ENCODE measurements at regions of chr9 and their contacts with region 1.

Region 1: DNA sequence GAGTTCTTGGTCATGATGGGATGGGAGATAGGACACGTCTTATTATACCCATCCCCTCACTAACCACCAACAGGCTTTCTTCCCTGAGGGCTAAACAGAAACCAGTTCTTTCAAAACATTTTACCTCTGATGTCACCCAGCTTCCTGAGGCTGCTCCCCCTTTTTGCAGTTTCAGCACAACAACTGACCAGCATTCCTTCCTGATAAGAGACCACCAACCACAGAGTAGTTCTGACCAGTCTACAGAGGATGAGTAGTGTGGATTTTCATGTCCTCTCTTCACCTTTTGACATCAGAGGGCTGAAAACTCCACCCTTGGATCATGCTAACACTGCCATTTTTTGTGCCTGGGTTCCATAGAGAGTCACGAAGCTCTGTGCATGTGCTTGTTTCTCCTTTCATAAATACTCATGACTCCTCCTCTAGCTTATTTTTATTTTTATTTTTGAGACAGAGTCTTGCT is 82.6 kb downstream of the OSTF1 start:
- DNase-seq: no peak
- H3K4me3 ChIP-seq: no peak overlapping the region
- H3K27ac ChIP-seq: no peak overlapping the region
- H3K4me1 ChIP-seq: peaks cover 0 to 2% (median 0%) of the 10 kb centered on the region in 4 experiments; a peak in 1 of 7 replicates
- H3K27me3 ChIP-seq: no peaks in the 10 kb centered on the region
- CTCF ChIP-seq: no peak
- EP300 ChIP-seq: no peak
- POLR2A ChIP-seq: no peak
- RAD21 ChIP-seq: no peak

Region 2: GRCh38 chr9:75185585-75186170 is 14.7 kb after region 1 on chr9:
- CTCF ChIA-PET with region 1: interaction called, 61 read pairs
- POLR2A ChIA-PET with region 1: interaction called, 3 read pairs
- DNase-seq: peak in 1 of 2 experiments; percentile 68
- H3K4me3 ChIP-seq: no peak overlapping the region
- H3K27ac ChIP-seq: no peak overlapping the region
- H3K4me1 ChIP-seq: no peaks in the 10 kb centered on the region
- H3K27me3 ChIP-seq: no peaks in the 10 kb centered on the region
- CTCF ChIP-seq: peak; percentile 73 to 78 (median 78)
- EP300 ChIP-seq: no peak
- POLR2A ChIP-seq: no peak
- RAD21 ChIP-seq: peak; percentile 44 to 59

Region 3: DNA sequence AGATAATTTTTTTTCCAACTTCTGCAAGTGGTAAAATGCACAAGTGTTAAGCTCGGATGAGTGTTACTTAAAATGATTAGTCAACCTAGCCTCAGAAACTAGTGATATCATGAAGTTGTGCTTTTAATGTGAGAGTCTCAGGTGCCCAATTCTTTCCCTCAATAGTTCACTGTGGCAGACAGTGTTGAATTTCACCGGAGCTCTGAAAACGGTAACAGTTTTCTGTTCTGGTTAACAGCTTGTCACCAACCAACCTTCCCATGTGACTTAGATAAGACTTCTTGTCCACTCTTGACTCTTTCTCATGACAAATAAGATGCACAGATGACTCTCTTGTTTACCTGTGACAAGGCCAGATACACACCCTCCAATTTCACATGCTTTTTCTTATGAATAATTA is 42.8 kb after region 1 on chr9:
- CTCF ChIA-PET with region 1: no interaction called
- POLR2A ChIA-PET with region 1: no interaction called
- DNase-seq: no peak
- H3K4me3 ChIP-seq: no peak overlapping the region
- H3K27ac ChIP-seq: no peak overlapping the region
- H3K4me1 ChIP-seq: no peaks in the 10 kb centered on the region
- H3K27me3 ChIP-seq: no peaks in the 10 kb centered on the region
- CTCF ChIP-seq: no peak
- EP300 ChIP-seq: no peak
- POLR2A ChIP-seq: no peak
- RAD21 ChIP-seq: no peak

Region 4: DNA sequence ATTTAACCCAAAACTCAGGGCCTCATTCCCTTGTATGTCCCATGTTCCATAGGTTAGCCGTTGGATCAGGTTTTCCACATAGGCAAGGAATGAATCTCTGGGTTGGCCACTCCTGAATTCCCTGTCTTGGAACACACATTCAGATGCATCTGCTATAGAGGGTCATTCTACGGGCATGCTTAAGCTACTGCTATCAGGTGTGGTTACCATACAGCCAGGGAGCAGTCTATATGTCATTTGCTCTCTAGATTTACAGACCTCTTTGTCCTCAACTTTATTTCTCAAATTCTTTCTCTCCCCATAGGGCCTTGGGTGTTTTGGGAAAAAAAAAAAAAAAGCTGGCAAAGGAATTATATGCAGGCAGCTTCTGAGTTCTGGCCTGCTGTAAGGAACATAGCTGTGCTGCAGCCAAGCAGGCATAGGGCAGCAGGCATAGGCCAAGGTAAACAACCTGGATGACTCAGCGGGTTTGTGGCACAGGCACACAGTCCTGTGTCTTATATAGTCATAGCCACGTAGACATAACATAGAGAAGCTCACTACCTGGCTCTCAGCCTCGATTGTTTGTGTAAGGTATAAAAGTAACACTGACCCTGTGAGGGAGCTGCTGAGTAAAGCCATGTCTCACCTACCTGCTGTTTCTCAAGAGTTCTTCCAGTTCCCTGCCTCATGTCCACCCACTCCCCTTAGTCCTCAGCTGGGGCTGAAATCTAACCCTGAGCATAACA is 58.8 kb after region 1 on chr9:
- CTCF ChIA-PET with region 1: no interaction called
- POLR2A ChIA-PET with region 1: no interaction called
- DNase-seq: no peak
- H3K4me3 ChIP-seq: no peak overlapping the region
- H3K27ac ChIP-seq: no peak overlapping the region
- H3K4me1 ChIP-seq: no peaks in the 10 kb centered on the region
- H3K27me3 ChIP-seq: no peaks in the 10 kb centered on the region
- CTCF ChIP-seq: no peak
- EP300 ChIP-seq: no peak
- POLR2A ChIP-seq: no peak
- RAD21 ChIP-seq: no peak